GM12878 (cell line): ENCODE measurements at regions of chr9 and their contacts with region 1.

Region 1: DNA sequence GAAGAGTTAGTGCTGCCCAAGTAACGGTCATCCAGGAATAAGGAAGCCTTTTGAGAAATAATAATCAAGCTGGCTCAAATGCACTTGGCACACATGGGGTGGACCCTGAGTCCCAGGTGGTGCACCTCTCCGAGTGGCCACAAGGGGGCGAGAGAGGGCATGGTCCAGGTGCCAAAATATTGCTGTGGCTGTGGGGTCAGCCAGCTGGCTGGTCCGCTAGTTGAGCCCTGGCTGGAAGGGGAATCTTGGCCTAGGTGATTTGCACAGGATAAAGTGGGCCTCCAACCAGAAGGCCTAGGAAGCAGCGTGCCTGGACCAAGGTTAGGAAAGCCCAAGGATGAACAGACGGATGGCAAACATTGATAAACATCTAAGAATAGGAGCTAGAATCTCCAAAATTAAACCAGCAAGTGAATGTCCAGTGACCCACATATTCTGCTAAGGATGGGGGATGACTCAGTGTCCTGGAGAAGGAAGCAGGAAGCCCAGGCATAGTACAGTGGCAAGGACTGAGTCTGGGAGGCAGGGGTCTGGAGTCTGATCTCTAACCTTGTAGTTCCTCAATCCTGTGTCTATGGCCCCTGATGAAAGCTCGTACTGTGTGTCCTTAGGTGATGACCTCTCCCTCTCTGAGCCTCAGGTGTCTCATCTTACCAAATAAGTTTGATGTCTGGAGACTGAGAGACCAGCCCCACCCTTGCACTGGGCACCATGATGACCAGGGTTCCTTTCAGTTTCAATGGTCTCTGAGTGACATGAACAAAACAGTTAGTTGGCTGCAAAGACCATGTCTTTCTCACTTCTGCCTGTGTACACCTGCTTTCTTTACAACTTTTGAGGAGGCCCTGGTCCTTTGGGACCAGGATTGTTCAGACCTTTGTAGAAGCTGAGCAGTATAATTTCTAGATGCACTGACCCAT is 19.2 kb upstream of the SHB start:
- DNase-seq: no peak
- ATAC-seq: peak; percentile 70
- H3K4me3 ChIP-seq: no peak overlapping the region
- H3K27ac ChIP-seq: peak overlapping the region; percentile 13; the same call in 1 of the 2 replicates
- H3K4me1 ChIP-seq: peaks cover 37% of the 10 kb centered on the region
- H3K27me3 ChIP-seq: no peaks in the 10 kb centered on the region
- CTCF ChIP-seq: peak; percentile 86 to 98 (median 97)
- EP300 ChIP-seq: no peak
- POLR2A ChIP-seq: no peak
- RAD21 ChIP-seq: peak; percentile 90

Region 2: DNA sequence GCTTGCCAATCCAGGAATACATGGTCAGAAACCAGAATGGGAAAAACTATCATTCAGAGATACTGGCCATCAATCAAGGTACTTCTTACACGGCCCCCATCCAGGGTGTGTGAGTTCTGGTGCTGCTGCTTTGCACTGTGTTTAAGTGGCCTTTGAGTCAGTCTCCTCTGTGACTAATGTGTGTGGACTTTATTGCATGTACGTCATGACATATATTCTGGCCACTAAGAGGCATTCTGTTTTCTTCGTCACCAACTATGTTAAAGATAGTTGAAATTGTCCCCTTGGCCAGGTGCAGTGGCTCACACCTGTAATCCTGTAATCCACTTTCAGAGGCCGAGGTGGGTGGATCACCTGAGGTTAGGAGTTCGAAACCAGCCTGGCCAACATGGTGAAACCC is 311.9 kb before region 1 on chr9:
- CTCF ChIA-PET with region 1: no interaction called
- POLR2A ChIA-PET with region 1: no interaction called
- RAD21 ChIA-PET with region 1: no interaction called
- SMC1A ChIA-PET with region 1: no interaction called
- in situ Hi-C with region 1: no loop called
- intact Hi-C with region 1: no loop called
- DNase-seq: no peak
- ATAC-seq: no peak
- H3K4me3 ChIP-seq: no peak overlapping the region
- H3K27ac ChIP-seq: no peak overlapping the region
- H3K4me1 ChIP-seq: no peaks in the 10 kb centered on the region
- H3K27me3 ChIP-seq: no peaks in the 10 kb centered on the region
- CTCF ChIP-seq: no peak
- EP300 ChIP-seq: no peak
- POLR2A ChIP-seq: no peak
- RAD21 ChIP-seq: no peak

Region 3: GRCh38 chr9:38039090-38039906 is 49.0 kb before region 1 on chr9:
- CTCF ChIA-PET with region 1: no interaction called
- POLR2A ChIA-PET with region 1: no interaction called
- RAD21 ChIA-PET with region 1: no interaction called
- SMC1A ChIA-PET with region 1: no interaction called
- in situ Hi-C with region 1: no loop called
- intact Hi-C with region 1: no loop called
- DNase-seq: no peak
- ATAC-seq: no peak
- H3K4me3 ChIP-seq: no peak overlapping the region
- H3K27ac ChIP-seq: no peak overlapping the region
- H3K4me1 ChIP-seq: peaks cover 5% of the 10 kb centered on the region
- H3K27me3 ChIP-seq: no peaks in the 10 kb centered on the region; a peak in 1 of 4 replicates
- CTCF ChIP-seq: no peak
- EP300 ChIP-seq: no peak
- POLR2A ChIP-seq: no peak
- RAD21 ChIP-seq: no peak

Region 4: GRCh38 chr9:38068866-38069629 is 19.2 kb before region 1 on chr9 and contains the start of gene SHB:
- CTCF ChIA-PET with region 1: interaction called, 16 read pairs
- POLR2A ChIA-PET with region 1: no interaction called
- RAD21 ChIA-PET with region 1: interaction called, 6 read pairs
- SMC1A ChIA-PET with region 1: interaction called, 23 read pairs
- in situ Hi-C with region 1: no loop called
- intact Hi-C with region 1: no loop called
- DNase-seq: no peak
- ATAC-seq: peak; percentile 67
- H3K4me3 ChIP-seq: peak within 1 kb of the TSS; percentile 90
- H3K27ac ChIP-seq: no peak within 1 kb of the TSS
- H3K4me1 ChIP-seq: peaks cover 28% of the 10 kb centered on the region
- H3K27me3 ChIP-seq: peaks cover 2 to 9% of the 10 kb centered on the region in 2 experiments; a peak in 3 of 4 replicates
- CTCF ChIP-seq: no peak
- EP300 ChIP-seq: no peak
- POLR2A ChIP-seq: peak; percentile 80
- RAD21 ChIP-seq: no peak
- polyA plus RNA-seq, gene SHB: 0.56 to 0.69 TPM

Region 5: DNA sequence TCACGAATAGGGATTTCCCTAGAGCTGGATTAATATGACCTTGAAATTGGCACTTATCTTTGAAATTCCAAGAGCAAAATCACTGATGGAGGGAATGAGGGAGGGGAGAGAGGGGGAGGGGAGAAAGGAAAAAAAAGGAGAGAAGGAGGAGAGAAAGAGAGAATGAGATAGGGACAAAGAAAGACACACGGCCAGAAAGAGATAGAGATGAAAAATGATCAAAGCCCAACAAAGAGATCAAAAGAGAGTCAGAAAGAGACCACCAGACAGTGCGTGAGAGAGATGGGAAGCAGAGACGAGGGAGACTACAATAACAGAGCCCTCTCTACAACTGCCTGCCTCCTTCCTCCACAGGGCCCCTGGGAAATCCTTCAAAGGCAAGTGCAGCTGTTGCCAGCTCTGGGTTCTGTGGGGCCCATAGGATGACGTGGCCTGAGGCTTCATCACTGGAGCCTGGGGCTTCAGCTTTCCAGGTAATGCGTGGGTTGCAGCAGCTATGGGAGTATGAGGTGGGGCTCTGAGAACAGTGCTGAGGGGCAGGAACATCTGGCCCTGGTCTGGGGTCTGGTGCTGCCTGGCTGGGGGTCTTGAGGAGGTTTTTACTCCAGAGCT is 39.1 kb after region 1 on chr9:
- CTCF ChIA-PET with region 1: interaction called, 116 read pairs
- POLR2A ChIA-PET with region 1: interaction called, 6 read pairs
- RAD21 ChIA-PET with region 1: interaction called, 37 read pairs
- SMC1A ChIA-PET with region 1: interaction called, 106 read pairs
- in situ Hi-C with region 1: no loop called
- intact Hi-C with region 1: loop called (anchors 2 kb)
- DNase-seq: no peak
- ATAC-seq: peak; percentile 10; the same call in 1 of the 3 replicates
- H3K4me3 ChIP-seq: no peak overlapping the region
- H3K27ac ChIP-seq: no peak overlapping the region
- H3K4me1 ChIP-seq: no peaks in the 10 kb centered on the region
- H3K27me3 ChIP-seq: peaks cover 0 to 1% of the 10 kb centered on the region in 2 experiments; a peak in 2 of 4 replicates
- CTCF ChIP-seq: no peak
- EP300 ChIP-seq: no peak
- POLR2A ChIP-seq: no peak
- RAD21 ChIP-seq: no peak

Region 6: GRCh38 chr9:38154501-38155421 is 66.5 kb after region 1 on chr9:
- CTCF ChIA-PET with region 1: interaction called, 243 read pairs
- POLR2A ChIA-PET with region 1: interaction called, 4 read pairs
- RAD21 ChIA-PET with region 1: interaction called, 162 read pairs
- SMC1A ChIA-PET with region 1: interaction called, 169 read pairs
- in situ Hi-C with region 1: no loop called
- intact Hi-C with region 1: no loop called
- DNase-seq: no peak
- ATAC-seq: peak; percentile 20; the same call in 1 of the 3 replicates
- H3K4me3 ChIP-seq: no peak overlapping the region
- H3K27ac ChIP-seq: no peak overlapping the region
- H3K4me1 ChIP-seq: no peaks in the 10 kb centered on the region
- H3K27me3 ChIP-seq: no peaks in the 10 kb centered on the region; a peak in 1 of 4 replicates
- CTCF ChIP-seq: no peak
- EP300 ChIP-seq: no peak
- POLR2A ChIP-seq: no peak
- RAD21 ChIP-seq: no peak

Region 7: GRCh38 chr9:38227061-38227540 is 138.8 kb after region 1 on chr9:
- CTCF ChIA-PET with region 1: interaction called, 29 read pairs
- POLR2A ChIA-PET with region 1: interaction called, 4 read pairs
- RAD21 ChIA-PET with region 1: interaction called, 50 read pairs
- SMC1A ChIA-PET with region 1: interaction called, 48 read pairs
- in situ Hi-C with region 1: no loop called
- intact Hi-C with region 1: no loop called
- DNase-seq: peak; percentile 23
- ATAC-seq: peak; percentile 83
- H3K4me3 ChIP-seq: peak overlapping the region; percentile 32; the same call in 1 of the 2 replicates
- H3K27ac ChIP-seq: no peak overlapping the region
- H3K4me1 ChIP-seq: peaks cover 7% of the 10 kb centered on the region
- H3K27me3 ChIP-seq: peaks cover 0 to 5% of the 10 kb centered on the region in 2 experiments
- CTCF ChIP-seq: no peak
- EP300 ChIP-seq: no peak
- POLR2A ChIP-seq: no peak
- RAD21 ChIP-seq: no peak

Region 8: DNA sequence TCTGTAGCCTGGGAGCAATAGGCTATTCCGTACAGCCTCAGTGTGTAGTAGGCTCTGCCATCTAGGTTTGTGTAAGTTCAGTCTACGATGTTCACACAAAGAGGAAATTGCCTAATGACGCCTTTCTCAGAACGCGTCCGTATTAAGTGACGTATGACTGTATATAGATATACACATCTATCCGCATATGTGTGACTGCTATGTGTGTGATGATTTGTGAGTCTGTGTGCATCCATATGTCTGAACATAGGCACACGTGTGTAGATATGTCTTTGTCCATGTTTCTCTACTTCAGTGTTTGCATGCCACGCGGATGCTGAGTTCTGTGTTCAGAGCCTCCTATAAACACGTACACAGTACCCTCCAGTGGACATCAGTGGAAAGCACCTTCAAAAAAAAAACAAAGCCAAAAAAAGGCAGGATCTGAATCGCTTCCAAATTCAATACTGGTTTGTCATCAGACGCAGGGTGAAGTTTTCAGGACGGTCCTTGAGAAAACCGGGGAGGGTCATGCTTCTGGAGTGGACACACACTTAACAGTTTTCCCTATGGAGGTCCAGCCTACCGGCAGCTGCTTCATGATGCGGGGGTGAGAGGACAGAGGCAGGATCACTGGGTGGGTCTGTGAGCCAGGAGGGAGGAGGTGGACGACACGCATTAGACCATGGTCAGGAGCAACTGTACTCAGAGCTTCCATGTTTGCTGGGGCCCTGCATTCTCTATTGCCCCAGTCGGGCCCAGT is 274.8 kb after region 1 on chr9:
- CTCF ChIA-PET with region 1: interaction called, 33 read pairs
- POLR2A ChIA-PET with region 1: no interaction called
- RAD21 ChIA-PET with region 1: interaction called, 31 read pairs
- SMC1A ChIA-PET with region 1: interaction called, 35 read pairs
- in situ Hi-C with region 1: no loop called
- intact Hi-C with region 1: loop called (anchors 1 kb)
- DNase-seq: peak; percentile 35
- ATAC-seq: peak; percentile 86
- H3K4me3 ChIP-seq: no peak overlapping the region
- H3K27ac ChIP-seq: no peak overlapping the region
- H3K4me1 ChIP-seq: no peaks in the 10 kb centered on the region
- H3K27me3 ChIP-seq: no peaks in the 10 kb centered on the region
- CTCF ChIP-seq: peak; percentile 50 to 84 (median 57); a peak in 5 of 6 replicates
- EP300 ChIP-seq: no peak
- POLR2A ChIP-seq: no peak
- RAD21 ChIP-seq: peak; percentile 87